Left cardiac atrium (tissue), 4 donors: ENCODE measurements at regions of chr7 and their contacts with region 1.

Region 1: GRCh38 chr7:117873310-117874190 is at the start of gene CTTNBP2:
- DNase-seq: peak; percentile 70
- ATAC-seq: peak; percentile 88 to 90
- total RNA-seq, gene CTTNBP2: 4.3 to 7.0 TPM

Region 2: DNA sequence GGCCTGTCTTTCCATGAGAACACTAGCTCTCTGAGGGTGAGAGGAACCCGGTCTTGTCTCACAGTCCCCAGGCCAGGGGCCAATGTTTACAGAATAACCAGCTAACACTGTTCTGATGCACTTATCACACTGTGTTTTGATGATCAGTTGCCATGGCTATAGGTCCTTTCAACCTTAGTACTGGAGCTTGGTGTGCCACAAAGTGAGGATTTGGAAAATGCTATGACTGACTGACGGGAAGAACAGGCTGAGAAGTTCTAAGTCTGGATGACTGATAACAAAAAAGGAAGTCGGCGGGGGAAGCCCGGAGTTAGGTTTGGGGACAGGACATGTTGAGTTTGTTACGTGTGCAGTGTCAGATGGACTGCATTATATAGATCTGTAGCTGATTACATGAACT is 142.1 kb before region 1 on chr7:
- intact Hi-C with region 1: loop called in 1 of 2 experiments (anchors 5 kb)
- DNase-seq: peak; percentile 32
- ATAC-seq: peak in 1 of 2 donors; percentile 66

Region 3: GRCh38 chr7:118094040-118094439 is 220.5 kb after region 1 on chr7:
- intact Hi-C with region 1: no loop called
- DNase-seq: no peak
- ATAC-seq: no peak

Region 4: GRCh38 chr7:118264836-118265235 is 391.3 kb after region 1 on chr7:
- intact Hi-C with region 1: no loop called
- DNase-seq: no peak
- ATAC-seq: no peak